GM10248 (cell line): ENCODE measurements at regions of chr17 and their contacts with region 1.

Region 1: DNA sequence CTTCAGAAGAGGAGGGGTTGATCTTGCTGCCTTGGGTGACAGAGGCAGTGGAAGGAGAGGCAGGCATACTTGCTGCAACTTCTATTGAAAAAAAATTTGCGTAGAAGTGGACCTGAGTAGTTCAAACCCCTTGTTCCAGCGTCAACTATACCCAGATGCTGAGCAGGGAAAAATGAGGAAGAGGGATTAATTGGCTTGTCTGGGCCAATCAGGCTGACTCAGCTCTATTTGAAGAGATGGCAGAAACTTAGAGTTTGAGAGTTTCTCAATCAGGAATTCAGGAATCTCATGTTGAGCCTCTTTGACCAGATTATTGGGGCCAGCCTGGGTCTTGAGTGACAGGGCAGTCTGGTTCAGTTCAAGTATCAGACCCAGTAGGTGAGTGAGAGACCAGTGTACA is 17.6 kb downstream of the CASC3 start:
- DNase-seq: no peak
- CTCF ChIP-seq: no peak

Region 2: GRCh38 chr17:40062329-40063186 is 95.4 kb before region 1 on chr17 and contains the start of gene THRA:
- CTCF ChIA-PET with region 1: no interaction called
- POLR2A ChIA-PET with region 1: no interaction called
- DNase-seq: peak; percentile 88
- CTCF ChIP-seq: peak; percentile 27

Region 3: GRCh38 chr17:40177275-40177874 is 19.4 kb after region 1 on chr17 and contains the start of gene RAPGEFL1:
- CTCF ChIA-PET with region 1: no interaction called
- POLR2A ChIA-PET with region 1: interaction called, 11 read pairs
- DNase-seq: peak; percentile 94
- CTCF ChIP-seq: no peak

Region 4: GRCh38 chr17:41211845-41212466 is 1054.0 kb after region 1 on chr17:
- CTCF ChIA-PET with region 1: no interaction called
- POLR2A ChIA-PET with region 1: no interaction called
- DNase-seq: no peak
- CTCF ChIP-seq: no peak